ENCODE measurements at regions of chr14 and their contacts with region 1.

Region 1: DNA sequence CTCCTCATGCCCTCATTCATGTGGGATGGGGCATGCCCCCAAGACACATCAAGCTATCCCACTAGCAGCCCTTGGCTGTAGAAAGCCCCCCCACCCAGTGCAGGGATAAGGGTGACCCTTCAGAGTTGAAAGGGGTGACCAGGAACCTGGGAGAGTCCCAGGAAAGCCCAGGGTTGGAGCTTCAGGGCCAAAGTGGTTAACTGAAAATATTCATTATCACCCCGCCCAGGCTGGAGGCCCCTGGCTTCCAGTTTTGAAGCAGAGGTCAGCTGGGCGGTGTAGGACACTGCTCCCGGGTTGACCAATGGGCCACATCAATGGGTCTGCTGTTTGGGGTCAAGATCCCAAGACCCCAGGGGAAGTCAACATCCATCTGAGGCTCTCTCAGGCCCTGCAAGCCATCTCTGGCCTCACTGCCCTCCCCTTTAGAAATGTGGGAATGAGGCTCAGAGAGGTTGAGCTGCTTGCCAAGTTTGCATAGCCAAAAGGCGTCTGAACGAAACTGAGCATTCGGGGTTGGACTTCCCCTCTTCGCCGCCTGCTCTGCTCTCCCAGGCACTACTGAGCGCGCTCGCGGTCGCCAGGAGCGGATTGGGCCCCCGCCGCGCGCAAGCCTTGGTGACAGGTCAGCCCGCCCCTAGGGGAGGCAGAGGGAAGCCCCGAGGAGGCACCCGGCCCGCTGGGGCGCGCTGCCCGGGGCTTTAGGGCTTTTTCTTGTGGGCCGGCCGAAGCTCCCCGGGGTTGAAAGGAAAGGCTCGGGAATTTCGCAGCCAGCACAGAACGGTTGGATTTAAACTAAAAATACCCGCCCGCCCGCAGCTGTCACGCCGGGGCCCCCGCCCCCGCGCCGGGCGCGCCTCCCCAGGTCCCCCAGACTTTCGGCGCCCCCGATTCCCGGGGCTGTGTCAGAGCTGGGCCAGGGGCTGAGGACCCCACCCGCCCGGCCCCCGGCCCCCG is 576 bp downstream of the SYNE3 start:
- DNase-seq: peak; percentile 93
- ATAC-seq: peak; percentile 85
- H3K4me3 Mint-ChIP-seq: peak overlapping the region; percentile 87
- H3K27ac Mint-ChIP-seq: peak overlapping the region; percentile 94
- H3K4me1 Mint-ChIP-seq: peaks cover 68% of the 10 kb centered on the region
- H3K27me3 Mint-ChIP-seq: no peaks in the 10 kb centered on the region

Region 2: GRCh38 chr14:94392510-94392935 is 1123.4 kb before region 1 on chr14:
- CTCF ChIA-PET with region 1: no interaction called
- POLR2A ChIA-PET with region 1: no interaction called
- intact Hi-C with region 1: loop called in 1 of 2 experiments (anchors 5 kb)
- DNase-seq: peak; percentile 84
- ATAC-seq: peak; percentile 67
- H3K4me3 Mint-ChIP-seq: no peak overlapping the region
- H3K27ac Mint-ChIP-seq: peak overlapping the region; percentile 97
- H3K4me1 Mint-ChIP-seq: peaks cover 70% of the 10 kb centered on the region
- H3K27me3 Mint-ChIP-seq: peaks cover 5% of the 10 kb centered on the region

Region 3: DNA sequence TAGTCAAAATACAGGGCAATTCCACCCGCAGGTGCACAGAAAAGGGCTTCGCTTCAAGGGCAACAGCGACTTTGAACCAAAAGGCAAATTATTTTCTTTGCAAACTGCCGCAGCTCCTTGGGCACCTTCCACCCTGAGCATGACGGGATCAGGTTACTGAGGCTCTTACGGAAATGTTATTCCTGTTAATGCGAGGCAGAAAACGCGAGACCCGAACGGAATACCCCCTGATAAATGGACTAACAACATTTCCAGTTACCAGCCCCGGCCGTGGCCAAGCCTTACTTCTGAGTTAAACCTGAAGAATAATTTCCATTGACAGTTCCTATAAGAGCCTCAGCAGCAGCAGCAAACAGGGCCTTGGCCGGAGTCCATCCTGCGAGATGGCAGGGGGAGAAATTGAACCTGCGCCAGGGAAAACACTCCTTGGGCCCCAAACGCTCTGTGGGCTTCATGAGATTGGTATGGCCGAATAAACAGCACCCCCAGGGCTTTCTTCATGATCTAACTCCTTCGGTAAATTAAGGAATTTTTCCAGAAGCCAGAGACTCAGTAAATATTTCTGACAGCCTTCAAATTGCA is 288.5 kb before region 1 on chr14:
- CTCF ChIA-PET with region 1: no interaction called
- POLR2A ChIA-PET with region 1: no interaction called
- intact Hi-C with region 1: no loop called
- DNase-seq: no peak
- ATAC-seq: no peak
- H3K4me3 Mint-ChIP-seq: no peak overlapping the region
- H3K27ac Mint-ChIP-seq: no peak overlapping the region
- H3K4me1 Mint-ChIP-seq: no peaks in the 10 kb centered on the region
- H3K27me3 Mint-ChIP-seq: no peaks in the 10 kb centered on the region

Region 4: GRCh38 chr14:95442633-95443021 is 73.2 kb before region 1 on chr14:
- CTCF ChIA-PET with region 1: interaction called, 16 read pairs
- POLR2A ChIA-PET with region 1: no interaction called
- intact Hi-C with region 1: no loop called
- DNase-seq: peak; percentile 87
- ATAC-seq: peak; percentile 98
- H3K4me3 Mint-ChIP-seq: no peak overlapping the region
- H3K27ac Mint-ChIP-seq: peak overlapping the region; percentile 82
- H3K4me1 Mint-ChIP-seq: peaks cover 4% of the 10 kb centered on the region
- H3K27me3 Mint-ChIP-seq: no peaks in the 10 kb centered on the region

Region 5: GRCh38 chr14:95495538-95496025 is 20.3 kb before region 1 on chr14:
- CTCF ChIA-PET with region 1: interaction called, 4 read pairs
- POLR2A ChIA-PET with region 1: no interaction called
- intact Hi-C with region 1: loop called (anchors 2 kb)
- DNase-seq: peak; percentile 49
- ATAC-seq: peak; percentile 78
- H3K4me3 Mint-ChIP-seq: peak overlapping the region; percentile 8
- H3K27ac Mint-ChIP-seq: peak overlapping the region; percentile 76
- H3K4me1 Mint-ChIP-seq: peaks cover 66% of the 10 kb centered on the region
- H3K27me3 Mint-ChIP-seq: no peaks in the 10 kb centered on the region

Region 6: GRCh38 chr14:95534299-95535225 is 18.7 kb after region 1 on chr14 and contains the start of gene GLRX5:
- CTCF ChIA-PET with region 1: interaction called, 10 read pairs
- POLR2A ChIA-PET with region 1: interaction called, 4 read pairs
- intact Hi-C with region 1: loop called (anchors 1 kb)
- DNase-seq: peak; percentile 98
- ATAC-seq: peak; percentile 94
- H3K4me3 Mint-ChIP-seq: peak within 1 kb of the TSS; percentile 93
- H3K27ac Mint-ChIP-seq: peak within 1 kb of the TSS; percentile 94
- H3K4me1 Mint-ChIP-seq: peaks cover 60% of the 10 kb centered on the region
- H3K27me3 Mint-ChIP-seq: no peaks in the 10 kb centered on the region
- total RNA-seq, gene GLRX5: 37.9 to 44.1 TPM

Region 7: DNA sequence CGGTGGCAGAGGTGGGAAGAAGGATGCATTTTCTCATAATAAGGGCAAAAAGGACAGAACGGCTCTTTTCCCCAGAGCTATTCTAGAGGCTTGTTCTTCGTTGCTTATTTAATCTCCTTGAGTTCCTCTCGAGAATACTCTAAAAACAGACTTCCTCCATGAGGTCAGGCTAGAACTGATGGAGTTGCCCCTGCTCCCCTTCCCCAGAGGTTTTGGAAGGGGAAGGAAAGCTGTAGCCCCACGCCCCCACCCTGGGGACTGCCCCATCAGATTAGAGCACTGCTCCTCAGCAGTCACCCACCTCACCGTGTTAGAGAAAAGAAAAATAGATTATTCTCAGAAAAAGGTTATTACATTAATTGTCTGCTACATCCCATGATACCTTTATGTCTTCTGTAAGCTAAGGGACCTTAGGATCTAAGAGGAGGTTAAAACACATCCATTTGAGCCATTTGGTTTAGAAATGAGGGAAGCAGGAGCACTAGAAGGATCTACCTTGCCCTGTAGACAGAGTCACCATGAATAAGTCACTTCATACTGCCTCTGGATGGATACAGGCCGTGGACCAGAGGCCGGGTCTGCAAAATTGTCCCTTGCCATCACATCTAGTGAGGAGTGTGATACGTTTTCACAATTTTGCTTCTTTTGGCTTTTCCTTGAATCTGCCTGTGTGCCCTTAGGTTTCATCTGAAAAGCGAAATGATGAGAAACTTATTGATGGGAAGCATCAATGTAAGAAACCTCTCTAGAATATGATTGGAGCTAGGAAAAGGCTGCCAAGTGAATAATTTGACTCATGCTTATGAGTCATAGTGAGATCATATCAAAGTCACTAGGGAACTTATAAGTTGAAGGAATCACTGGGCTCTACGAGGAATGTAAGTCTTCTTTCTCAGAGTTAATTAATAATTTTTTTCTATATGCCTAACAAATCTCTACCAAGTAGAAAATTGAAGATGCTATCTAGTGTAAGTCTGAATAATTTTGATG is 29.6 kb after region 1 on chr14:
- CTCF ChIA-PET with region 1: no interaction called
- POLR2A ChIA-PET with region 1: no interaction called
- intact Hi-C with region 1: no loop called
- DNase-seq: no peak
- ATAC-seq: peak; percentile 60
- H3K4me3 Mint-ChIP-seq: no peak overlapping the region
- H3K27ac Mint-ChIP-seq: no peak overlapping the region
- H3K4me1 Mint-ChIP-seq: peaks cover 17% of the 10 kb centered on the region
- H3K27me3 Mint-ChIP-seq: no peaks in the 10 kb centered on the region